ENCODE measurements at regions of chr5 and their contacts with region 1.

Region 1: GRCh38 chr5:139787568-139788293 is 7.9 kb upstream of the PSD2 start:
- DNase-seq: peak; percentile 66
- ATAC-seq: peak; percentile 84
- H3K4me3 ChIP-seq: peak overlapping the region; percentile 59 to 84 (median 68)
- H3K27ac ChIP-seq: no peak overlapping the region
- H3K4me1 ChIP-seq: peaks cover 14% of the 10 kb centered on the region
- H3K27me3 ChIP-seq: peaks cover 4 to 34% of the 10 kb centered on the region in 2 experiments; a peak in 4 of 5 replicates
- CTCF ChIP-seq: peak; percentile 95
- EP300 ChIP-seq: no peak
- POLR2A ChIP-seq: no peak
- RAD21 ChIP-seq: peak; percentile 97

Region 2: DNA sequence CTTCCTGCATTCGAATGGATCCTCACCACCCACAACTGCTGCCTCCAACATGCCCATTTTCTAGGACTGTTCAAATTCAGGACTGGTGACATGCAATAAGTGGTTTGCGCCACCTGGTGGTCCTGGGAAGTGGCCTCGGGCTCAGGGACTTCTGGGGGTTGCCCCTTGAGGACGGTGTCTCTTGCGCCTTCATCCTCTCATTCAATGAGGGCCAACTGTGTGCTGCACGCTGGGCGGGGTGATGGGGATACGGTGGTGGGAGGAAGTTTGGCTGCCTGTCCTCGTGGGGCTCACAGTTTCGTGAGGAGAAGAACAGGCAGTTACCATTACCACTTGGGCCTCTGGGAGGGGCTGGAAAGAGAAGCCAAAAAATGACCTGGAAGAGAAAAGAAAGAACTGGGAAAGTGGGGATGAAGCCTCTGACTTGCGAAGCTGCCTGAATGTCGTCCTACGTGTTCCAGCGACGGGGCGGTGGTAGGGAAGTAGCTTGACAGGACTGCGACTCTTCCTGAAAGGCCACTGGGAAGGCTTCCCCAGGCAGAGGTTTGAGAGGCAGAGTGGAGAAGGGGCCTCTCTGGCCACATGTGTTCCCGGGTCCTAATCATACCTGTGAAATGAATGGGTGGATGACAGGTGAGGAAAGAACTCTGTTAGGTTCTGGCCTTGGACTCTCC is 56.9 kb after region 1 on chr5:
- CTCF ChIA-PET with region 1: interaction called, 32 read pairs
- POLR2A ChIA-PET with region 1: interaction called, 3 read pairs
- in situ Hi-C with region 1: loop called (anchors 5 kb)
- intact Hi-C with region 1: loop called (anchors 1 kb)
- DNase-seq: peak; percentile 66
- ATAC-seq: peak; percentile 84
- H3K4me3 ChIP-seq: no peak overlapping the region
- H3K27ac ChIP-seq: no peak overlapping the region
- H3K4me1 ChIP-seq: no peaks in the 10 kb centered on the region
- H3K27me3 ChIP-seq: peaks cover 6 to 49% of the 10 kb centered on the region in 2 experiments; a peak in 3 of 5 replicates
- CTCF ChIP-seq: peak; percentile 87
- EP300 ChIP-seq: no peak
- POLR2A ChIP-seq: no peak
- RAD21 ChIP-seq: peak; percentile 73

Region 3: GRCh38 chr5:139863855-139864558 is 76.3 kb after region 1 on chr5:
- CTCF ChIA-PET with region 1: interaction called, 28 read pairs
- POLR2A ChIA-PET with region 1: no interaction called
- in situ Hi-C with region 1: no loop called
- intact Hi-C with region 1: loop called (anchors 1 kb)
- DNase-seq: peak; percentile 28
- ATAC-seq: peak; percentile 81
- H3K4me3 ChIP-seq: no peak overlapping the region
- H3K27ac ChIP-seq: no peak overlapping the region
- H3K4me1 ChIP-seq: no peaks in the 10 kb centered on the region
- H3K27me3 ChIP-seq: peaks cover 4 to 23% of the 10 kb centered on the region in 2 experiments; a peak in 3 of 5 replicates
- CTCF ChIP-seq: peak; percentile 79
- EP300 ChIP-seq: no peak
- POLR2A ChIP-seq: no peak
- RAD21 ChIP-seq: peak; percentile 58; the same call in 1 of the 2 replicates

Region 4: GRCh38 chr5:139968547-139969261 is 181.0 kb after region 1 on chr5:
- CTCF ChIA-PET with region 1: interaction called, 45 read pairs
- POLR2A ChIA-PET with region 1: no interaction called
- in situ Hi-C with region 1: loop called (anchors 5 kb)
- intact Hi-C with region 1: loop called (anchors 1 kb)
- DNase-seq: peak; percentile 62
- ATAC-seq: peak; percentile 99
- H3K4me3 ChIP-seq: peak overlapping the region in 1 of 3 experiments; percentile 33; a peak in 1 of 6 replicates
- H3K27ac ChIP-seq: no peak overlapping the region
- H3K4me1 ChIP-seq: no peaks in the 10 kb centered on the region
- H3K27me3 ChIP-seq: peaks cover 2 to 17% of the 10 kb centered on the region in 2 experiments; a peak in 3 of 5 replicates
- CTCF ChIP-seq: peak; percentile 100
- EP300 ChIP-seq: 0 out of 4 replicates have a peak, but pooled peaks of 1 of the 2 experiments have one; percentile 5
- POLR2A ChIP-seq: no peak
- RAD21 ChIP-seq: peak; percentile 97

Region 5: DNA sequence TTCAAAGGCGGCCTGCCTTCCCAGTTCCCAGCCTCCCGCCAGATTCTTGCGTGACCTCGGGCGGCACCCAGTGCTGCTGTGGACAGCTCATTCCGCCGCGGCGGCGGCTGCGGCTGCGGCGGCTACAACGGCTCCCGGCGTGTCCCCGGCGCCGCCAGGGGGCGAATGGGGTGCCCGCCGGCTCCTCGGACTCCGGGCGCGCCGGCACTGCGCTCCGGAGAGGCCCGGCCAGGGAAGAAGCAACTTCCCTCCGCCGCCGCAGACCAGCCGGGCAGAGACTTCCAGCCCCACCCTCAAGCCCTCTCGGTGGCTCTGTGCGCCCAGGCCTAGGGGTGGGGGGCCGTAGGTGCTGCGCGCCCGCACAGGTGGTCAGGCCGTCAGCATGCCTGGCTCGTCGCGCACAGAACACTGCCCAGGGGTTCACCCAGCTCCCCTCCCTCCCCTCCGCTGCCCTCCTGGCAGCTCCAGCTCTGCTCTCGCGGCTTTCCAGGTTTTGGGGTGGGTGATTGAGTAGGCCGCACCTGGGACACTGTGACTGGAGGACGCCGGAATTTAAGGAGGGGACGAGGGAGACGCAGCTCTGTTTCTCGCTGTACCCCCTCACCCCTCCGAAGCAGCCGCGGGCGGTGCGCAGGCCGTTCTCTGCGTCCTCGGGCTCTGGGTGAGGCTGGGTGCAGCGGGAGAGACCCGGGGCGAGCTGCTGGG is 358.2 kb after region 1 on chr5:
- CTCF ChIA-PET with region 1: no interaction called
- POLR2A ChIA-PET with region 1: no interaction called
- in situ Hi-C with region 1: loop called (anchors 5 kb)
- intact Hi-C with region 1: no loop called
- DNase-seq: peak; percentile 38
- ATAC-seq: peak; percentile 90
- H3K4me3 ChIP-seq: peak overlapping the region; percentile 49 to 69 (median 54); a peak in 4 of 6 replicates
- H3K27ac ChIP-seq: no peak overlapping the region
- H3K4me1 ChIP-seq: peaks cover 50% of the 10 kb centered on the region
- H3K27me3 ChIP-seq: peaks cover 1 to 5% of the 10 kb centered on the region in 2 experiments; a peak in 1 of 5 replicates
- CTCF ChIP-seq: peak; percentile 76
- EP300 ChIP-seq: no peak
- POLR2A ChIP-seq: no peak
- RAD21 ChIP-seq: peak; percentile 89

Measured in HepG2 (cell line).